Sciatic nerve (tissue), 2 donors: ENCODE measurements at regions of chr1 and their contacts with region 1.

Region 1: GRCh38 chr1:51924455-51924854 is 45.9 kb upstream of the NRDC start:
- DNase-seq: no peak
- ATAC-seq: no peak

Region 2: DNA sequence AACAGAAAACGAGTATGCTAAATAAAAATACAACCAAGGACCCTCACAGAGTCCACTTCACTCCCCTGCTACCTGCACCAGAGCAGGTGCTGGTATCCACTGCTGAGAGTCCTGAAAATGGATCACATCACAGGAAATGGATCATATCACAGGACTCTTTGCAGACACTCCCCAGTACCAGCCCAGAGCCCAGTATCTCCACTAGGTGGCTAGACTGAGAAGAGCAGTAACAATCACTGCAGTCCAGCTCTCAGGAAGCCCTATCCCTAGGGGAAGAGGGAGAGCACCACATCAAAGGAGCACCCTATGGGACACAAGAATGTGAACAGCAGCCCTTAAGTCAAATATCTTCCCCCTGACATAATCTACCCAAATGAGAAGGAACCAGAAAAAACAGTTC is 1928.7 kb before region 1 on chr1:
- intact Hi-C with region 1: loop called (anchors 5 kb)
- DNase-seq: no peak
- ATAC-seq: no peak

Region 3: GRCh38 chr1:51819810-51820209 is 104.6 kb before region 1 on chr1:
- intact Hi-C with region 1: no loop called
- DNase-seq: no peak
- ATAC-seq: no peak